BJ (cell line): ENCODE measurements at regions of chrX and their contacts with region 1.

Region 1: GRCh38 chrX:16870095-16870860 is at the start of gene RBBP7:
- DNase-seq: peak; percentile 46
- H3K4me3 ChIP-seq: peak within 1 kb of the TSS; percentile 77
- H3K27me3 ChIP-seq: no peaks in the 10 kb centered on the region
- CTCF ChIP-seq: no peak
- polyA plus RNA-seq, gene RBBP7: 118 and 123 TPM in 2 replicates

Region 2: GRCh38 chrX:16882702-16883486 is 12.6 kb after region 1 on chrX:
- CTCF ChIA-PET with region 1: interaction called, 17 read pairs
- POLR2A ChIA-PET with region 1: no interaction called
- DNase-seq: no peak
- H3K4me3 ChIP-seq: peak overlapping the region; percentile 47
- H3K27me3 ChIP-seq: no peaks in the 10 kb centered on the region
- CTCF ChIP-seq: peak; percentile 66

Region 3: GRCh38 chrX:17081511-17081910 is 211.2 kb after region 1 on chrX:
- CTCF ChIA-PET with region 1: no interaction called
- POLR2A ChIA-PET with region 1: interaction called, 11 read pairs
- DNase-seq: no peak
- H3K4me3 ChIP-seq: no peak overlapping the region
- H3K27me3 ChIP-seq: no peaks in the 10 kb centered on the region
- CTCF ChIP-seq: no peak